ENCODE measurements at regions of chr16 and their contacts with region 1.

Region 1: DNA sequence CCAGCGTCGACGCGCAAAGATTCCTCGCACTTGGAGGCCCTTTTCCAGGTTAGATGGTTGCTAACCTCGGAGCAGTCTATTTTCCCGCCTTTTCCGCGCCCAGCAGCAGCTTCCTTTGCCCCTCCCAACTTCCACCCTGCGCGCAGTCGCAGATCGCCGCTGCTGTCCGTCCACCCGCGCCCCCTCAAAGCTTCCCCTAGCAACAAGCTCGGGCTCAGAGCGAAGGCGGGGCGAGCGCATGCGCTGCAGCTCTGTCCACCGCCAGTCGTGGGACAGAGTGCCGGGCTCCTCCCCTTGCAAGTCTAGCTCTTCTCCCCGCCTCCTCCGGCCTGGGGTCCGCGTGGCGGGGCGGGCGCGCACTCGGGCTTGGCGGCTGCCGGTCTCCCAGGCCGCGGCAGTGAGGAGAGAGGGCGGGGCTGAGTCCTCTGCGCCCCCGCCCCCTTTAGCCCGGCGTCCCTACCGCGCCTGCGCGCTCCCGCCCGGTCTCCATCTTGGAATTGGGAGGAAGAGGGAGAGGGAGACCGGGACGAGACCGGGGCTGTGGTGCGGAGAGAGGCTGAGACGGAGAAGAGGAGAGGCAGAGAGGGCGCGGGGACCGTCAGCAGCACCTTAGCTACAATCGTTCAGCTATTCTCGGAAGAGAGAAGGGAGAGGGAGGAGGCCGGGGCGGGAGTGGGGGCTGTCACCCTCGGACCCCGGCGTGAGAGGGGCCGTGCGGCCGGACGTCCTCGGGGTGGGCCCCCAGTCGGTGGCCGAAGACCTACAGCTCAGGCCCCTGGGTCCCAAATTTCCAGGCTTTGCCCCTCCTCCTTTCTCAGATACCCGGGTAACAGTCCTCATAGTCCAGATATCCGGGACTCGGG is at the start of gene TAOK2:
- DNase-seq: peak; percentile 89 to 96 (median 93)
- H3K4me3 ChIP-seq: peak within 1 kb of the TSS; percentile 96
- H3K4me3 Mint-ChIP-seq: peak within 1 kb of the TSS; percentile 87 to 95 (median 94)
- H3K27ac ChIP-seq: peak within 1 kb of the TSS; percentile 71
- H3K27ac Mint-ChIP-seq: peak within 1 kb of the TSS; percentile 86 to 98 (median 93)
- H3K4me1 ChIP-seq: peaks cover 31% of the 10 kb centered on the region
- H3K4me1 Mint-ChIP-seq: peaks cover 34 to 39% (median 36%) of the 10 kb centered on the region in 3 donors
- H3K27me3 ChIP-seq: no peaks in the 10 kb centered on the region
- H3K27me3 Mint-ChIP-seq: no peaks in the 10 kb centered on the region
- total RNA-seq, gene TAOK2: 41.8 to 44.3 TPM

Region 2: DNA sequence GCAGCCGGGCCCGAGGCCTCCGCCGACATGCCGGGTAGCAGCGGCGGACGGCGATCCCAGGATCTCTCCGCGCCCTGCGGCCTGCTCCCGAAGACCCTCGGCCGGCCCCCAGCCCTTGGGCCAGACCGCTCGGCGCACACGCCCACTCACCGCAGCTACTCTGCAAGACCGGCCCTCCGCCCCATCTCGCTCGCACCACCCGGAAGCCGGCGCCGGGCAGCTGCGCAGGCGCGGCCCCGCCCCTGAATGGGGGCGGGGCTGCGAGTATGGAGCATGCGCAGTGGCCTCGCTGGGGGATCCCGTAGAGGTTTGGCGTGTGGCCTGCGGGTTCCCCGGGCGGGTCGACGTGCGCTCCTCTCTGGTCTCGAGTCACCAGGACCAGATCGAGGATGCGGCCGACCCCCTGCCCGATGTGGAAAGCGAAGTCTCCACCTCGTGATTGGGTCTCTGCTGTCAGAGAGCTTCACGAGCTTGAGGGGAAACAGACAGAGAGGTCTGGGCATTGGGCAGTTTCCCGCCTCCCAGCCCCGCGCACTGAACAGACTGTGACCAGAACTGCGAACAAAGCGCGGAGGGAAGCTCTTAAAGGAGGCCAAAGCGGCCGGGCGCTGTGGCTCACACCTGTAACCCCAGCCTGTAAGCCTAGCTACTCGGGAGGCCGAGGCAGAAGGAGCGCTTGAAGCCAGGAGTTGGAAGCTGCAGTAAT is 47.5 kb before region 1 on chr16 and contains the start of gene KCTD13:
- CTCF ChIA-PET with region 1: interaction called, 4 read pairs
- POLR2A ChIA-PET with region 1: interaction called, 15 read pairs
- DNase-seq: peak; percentile 80 to 93 (median 89)
- H3K4me3 ChIP-seq: peak within 1 kb of the TSS; percentile 94
- H3K4me3 Mint-ChIP-seq: peak within 1 kb of the TSS; percentile 93 to 98 (median 94)
- H3K27ac ChIP-seq: peak within 1 kb of the TSS; percentile 81
- H3K27ac Mint-ChIP-seq: peak within 1 kb of the TSS; percentile 89 to 98 (median 96)
- H3K4me1 ChIP-seq: peaks cover 18% of the 10 kb centered on the region
- H3K4me1 Mint-ChIP-seq: peaks cover 37 to 52% (median 47%) of the 10 kb centered on the region in 3 donors
- H3K27me3 ChIP-seq: no peaks in the 10 kb centered on the region
- H3K27me3 Mint-ChIP-seq: no peaks in the 10 kb centered on the region
- total RNA-seq, gene KCTD13: 35.7 to 37.1 TPM

Region 3: DNA sequence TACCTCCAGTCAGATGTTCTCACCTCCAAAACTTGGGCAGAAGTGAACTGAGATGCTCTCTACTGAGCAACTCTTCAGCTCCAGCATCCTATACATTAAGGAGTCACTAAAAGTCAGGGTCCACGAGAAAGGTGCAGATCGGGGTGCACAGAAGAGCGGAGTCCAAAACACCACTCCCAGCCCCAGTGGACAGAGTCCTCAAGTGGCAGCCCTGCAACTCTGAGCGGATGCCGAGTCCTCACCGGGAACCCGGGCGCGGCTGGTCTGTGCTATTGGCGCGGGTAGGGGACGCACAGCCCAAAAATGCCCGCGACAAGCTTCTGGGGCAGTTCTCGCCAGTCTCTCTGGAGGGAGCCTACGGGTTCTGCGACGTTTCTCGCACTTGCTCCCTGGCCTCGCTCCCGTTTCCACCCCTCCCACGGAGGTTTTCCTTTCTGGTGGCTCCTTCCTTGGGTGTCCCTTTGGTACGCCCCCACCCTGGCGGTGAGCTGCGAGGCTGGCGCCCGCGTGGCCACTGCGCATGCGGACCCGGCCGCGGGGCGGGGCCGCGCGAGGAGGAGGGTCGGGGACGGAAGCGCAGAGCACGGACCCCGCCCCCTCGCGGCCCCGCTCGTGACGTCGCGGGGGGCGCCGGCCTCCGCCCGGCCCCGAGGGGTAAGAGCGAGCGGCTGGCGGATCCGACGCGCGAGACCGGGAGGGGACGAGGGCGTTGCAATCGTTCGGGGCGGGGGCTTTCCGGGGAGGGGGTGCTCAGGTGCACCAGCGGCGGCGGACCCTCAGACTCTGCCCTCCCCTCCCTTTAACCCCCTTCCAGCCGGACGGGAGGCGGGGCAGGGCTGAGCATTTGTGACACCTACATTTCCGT is 11.9 kb before region 1 on chr16 and contains the start of gene TMEM219:
- CTCF ChIA-PET with region 1: interaction called, 33 read pairs
- POLR2A ChIA-PET with region 1: interaction called, 17 read pairs
- DNase-seq: peak; percentile 92 to 97 (median 95)
- H3K4me3 ChIP-seq: peak within 1 kb of the TSS; percentile 97
- H3K4me3 Mint-ChIP-seq: peak within 1 kb of the TSS; percentile 87 to 97 (median 89)
- H3K27ac ChIP-seq: peak within 1 kb of the TSS; percentile 86
- H3K27ac Mint-ChIP-seq: peak within 1 kb of the TSS; percentile 86 to 98 (median 95)
- H3K4me1 ChIP-seq: peaks cover 15% of the 10 kb centered on the region
- H3K4me1 Mint-ChIP-seq: peaks cover 18 to 30% (median 19%) of the 10 kb centered on the region in 3 donors
- H3K27me3 ChIP-seq: no peaks in the 10 kb centered on the region
- H3K27me3 Mint-ChIP-seq: no peaks in the 10 kb centered on the region
- total RNA-seq, gene TMEM219: 36.8 to 43.4 TPM

Region 4: GRCh38 chr16:29995911-29996772 is 22.5 kb after region 1 on chr16 and contains the start of gene INO80E:
- CTCF ChIA-PET with region 1: interaction called, 4 read pairs
- POLR2A ChIA-PET with region 1: interaction called, 14 read pairs
- DNase-seq: peak; percentile 97 to 99 (median 98)
- H3K4me3 ChIP-seq: peak within 1 kb of the TSS; percentile 83
- H3K4me3 Mint-ChIP-seq: peak within 1 kb of the TSS; percentile 95 to 99 (median 96)
- H3K27ac ChIP-seq: peak within 1 kb of the TSS; percentile 95
- H3K27ac Mint-ChIP-seq: peak within 1 kb of the TSS; percentile 96 to 99 (median 98)
- H3K4me1 ChIP-seq: peaks cover 19% of the 10 kb centered on the region
- H3K4me1 Mint-ChIP-seq: peaks cover 30 to 55% (median 46%) of the 10 kb centered on the region in 3 donors
- H3K27me3 ChIP-seq: no peaks in the 10 kb centered on the region
- H3K27me3 Mint-ChIP-seq: no peaks in the 10 kb centered on the region
- total RNA-seq, gene INO80E: 121 to 123 TPM

Region 5: DNA sequence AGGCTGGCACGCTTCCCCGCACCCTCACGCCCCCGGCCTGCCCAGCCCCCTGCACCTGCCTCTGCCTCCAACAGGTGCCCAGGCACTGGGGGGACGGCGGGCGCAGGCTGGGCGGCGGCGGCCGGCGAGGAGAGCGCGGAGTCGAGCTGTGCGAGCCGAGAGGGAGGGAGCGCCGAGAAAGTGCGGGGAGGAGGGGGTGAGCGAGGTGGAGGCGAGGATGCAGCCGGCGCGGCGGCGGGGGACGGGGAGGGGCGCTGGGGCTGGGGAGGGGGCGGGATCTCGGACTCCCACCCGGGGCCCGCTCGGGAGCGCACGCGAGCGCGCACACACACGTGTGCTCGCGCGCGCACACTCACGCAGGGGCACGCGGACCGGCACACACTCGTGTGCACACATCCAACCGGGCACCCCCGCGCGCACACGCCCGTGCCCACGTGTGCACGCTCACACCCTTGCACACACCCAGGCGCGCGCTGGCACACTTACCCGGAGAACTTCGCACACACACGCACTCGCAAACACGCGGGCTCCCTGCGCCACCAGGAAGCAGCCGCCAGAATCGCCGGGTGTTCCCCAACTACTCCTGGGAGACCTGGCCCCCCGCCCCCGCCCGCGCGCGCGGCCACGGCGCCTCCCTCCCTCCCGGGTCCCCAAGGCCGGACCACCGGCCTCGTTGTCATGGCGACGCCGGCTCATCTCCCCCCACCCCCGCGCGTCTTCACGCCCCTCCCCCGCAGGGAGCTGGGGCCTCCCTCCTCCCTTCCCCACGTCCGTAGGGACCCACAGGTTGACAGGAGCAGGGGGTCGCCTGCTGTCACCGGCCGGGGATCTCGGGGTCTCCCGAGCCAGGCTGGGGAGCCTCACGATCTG is 37.5 kb after region 1 on chr16 and contains the start of gene DOC2A:
- CTCF ChIA-PET with region 1: no interaction called
- POLR2A ChIA-PET with region 1: no interaction called
- DNase-seq: no peak
- H3K4me3 ChIP-seq: peak within 1 kb of the TSS; percentile 39
- H3K4me3 Mint-ChIP-seq: peak within 1 kb of the TSS; percentile 46 to 93 (median 82)
- H3K27ac ChIP-seq: no peak within 1 kb of the TSS
- H3K27ac Mint-ChIP-seq: peak within 1 kb of the TSS in 2 of 8 donors; percentile 72 to 89
- H3K4me1 ChIP-seq: peaks cover 6% of the 10 kb centered on the region
- H3K4me1 Mint-ChIP-seq: peaks cover 5 to 16% (median 7%) of the 10 kb centered on the region in 3 donors
- H3K27me3 ChIP-seq: peaks cover 7% of the 10 kb centered on the region
- H3K27me3 Mint-ChIP-seq: peaks cover 19 to 28% of the 10 kb centered on the region in 2 donors
- total RNA-seq, gene DOC2A: 0.13 to 0.42 TPM